Left colon (tissue), 2 donors: ENCODE measurements at regions of chr2 and their contacts with region 1.

Region 1: GRCh38 chr2:231925303-231926179 is 655 bp downstream of the NPPC start:
- DNase-seq: peak; percentile 69 to 87
- ATAC-seq: peak; percentile 95

Region 2: GRCh38 chr2:232142049-232142448 is 216.5 kb after region 1 on chr2:
- intact Hi-C with region 1: loop called in 1 of 2 experiments (anchors 5 kb)
- DNase-seq: peak in 1 of 2 donors; percentile 25
- ATAC-seq: peak; percentile 60

Region 3: DNA sequence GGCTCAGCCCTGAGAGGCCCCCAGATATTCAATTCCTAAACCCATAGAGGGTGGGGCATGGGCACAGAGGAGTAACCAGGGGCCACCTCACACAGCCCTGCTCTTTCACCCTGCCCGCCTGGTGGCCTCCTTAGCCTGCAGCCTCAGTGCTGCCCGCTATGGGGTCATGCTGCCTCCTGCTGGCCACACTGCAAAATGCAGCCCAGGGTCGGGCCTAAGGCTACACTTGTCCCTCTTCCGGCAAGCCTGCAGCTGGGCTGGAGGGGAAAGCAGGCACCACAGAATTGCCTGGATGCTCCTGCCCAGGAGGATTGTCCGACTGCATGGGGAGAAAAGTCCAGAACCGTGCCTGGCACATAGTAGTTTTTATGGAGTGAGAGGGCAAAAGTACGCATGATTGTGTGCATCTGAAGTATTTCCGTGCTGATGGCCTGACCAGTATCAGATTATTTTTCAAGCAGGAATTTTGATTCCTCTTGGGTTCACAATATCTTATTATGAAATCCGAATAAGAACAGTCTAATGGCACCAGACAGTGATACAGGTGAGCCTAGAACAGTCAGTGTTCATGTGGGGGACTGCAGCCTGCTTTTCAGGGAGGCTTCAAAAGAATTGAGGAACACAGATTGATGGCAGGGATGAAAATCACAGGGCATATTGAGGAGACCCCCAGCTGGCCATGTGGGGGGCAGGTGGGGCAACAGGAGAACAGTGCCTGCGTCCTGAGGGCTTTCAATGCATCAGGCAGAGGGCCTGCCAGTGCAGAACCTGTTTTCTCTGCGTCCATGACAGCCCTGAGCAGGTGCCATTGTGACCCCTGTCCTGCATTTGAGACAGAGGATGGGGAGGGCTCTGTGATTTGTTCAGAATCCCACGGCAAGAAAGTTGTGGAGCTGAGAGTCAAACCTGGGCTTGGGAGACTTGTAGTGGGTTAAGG is 401.8 kb after region 1 on chr2:
- intact Hi-C with region 1: loop called (anchors 5 to 10 kb)
- DNase-seq: peak; percentile 54 to 79
- ATAC-seq: peak; percentile 88

Region 4: DNA sequence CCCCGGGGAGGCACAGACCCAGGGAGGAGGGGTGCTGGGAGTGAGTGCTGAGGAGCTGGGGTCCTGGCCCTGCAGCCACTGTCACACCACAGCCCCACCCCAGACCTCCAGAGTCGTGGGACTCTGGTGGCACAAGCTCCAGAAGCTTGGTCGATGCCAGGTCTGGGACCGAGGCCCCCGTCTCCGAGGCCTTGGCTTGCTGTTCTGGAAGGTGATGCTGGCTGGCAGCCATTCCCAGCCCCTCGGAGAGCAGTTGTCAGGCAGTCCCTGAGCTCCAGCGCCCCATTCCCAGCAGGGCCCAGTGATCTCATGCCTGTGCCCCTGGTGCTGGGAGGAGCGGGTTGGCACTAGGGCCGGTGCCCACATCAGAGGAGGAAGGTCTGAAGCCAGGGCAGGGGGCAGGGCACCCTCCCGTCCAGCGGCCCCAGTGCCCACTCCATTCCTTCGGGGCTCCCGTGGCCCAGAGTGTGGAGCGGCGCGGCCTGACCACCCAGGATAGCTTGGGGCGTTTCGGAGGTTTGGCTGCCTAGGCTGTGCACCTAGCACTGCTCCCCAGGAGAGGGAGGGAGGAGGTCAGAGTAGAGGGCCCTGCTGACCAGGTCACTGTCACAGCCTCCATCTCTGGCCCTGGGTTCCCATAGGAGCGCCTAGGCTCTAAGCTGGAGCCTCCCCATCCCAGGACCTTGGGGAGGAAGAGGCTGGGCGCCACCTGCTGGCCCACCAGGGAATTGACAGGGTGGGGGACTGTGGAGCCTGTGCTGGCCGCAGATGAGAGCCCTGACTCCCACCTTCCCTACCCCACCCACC is 513.6 kb after region 1 on chr2:
- intact Hi-C with region 1: loop called (anchors 10 kb)
- DNase-seq: no peak
- ATAC-seq: peak; percentile 75